Activated CD4-positive, alpha-beta T cell treated with anti-CD3 and anti-CD28 coated beads for 36 hours (primary cell): ENCODE measurements at regions of chr2 and their contacts with region 1.

Region 1: GRCh38 chr2:181937473-181937872 is 45.9 kb downstream of the ITPRID2 start:
- DNase-seq: no peak
- ATAC-seq: no peak
- H3K4me3 Mint-ChIP-seq: no peak overlapping the region
- H3K27ac Mint-ChIP-seq: no peak overlapping the region
- H3K4me1 Mint-ChIP-seq: no peaks in the 10 kb centered on the region
- H3K27me3 Mint-ChIP-seq: peaks cover 7% of the 10 kb centered on the region

Region 2: GRCh38 chr2:181895818-181896217 is 41.7 kb before region 1 on chr2:
- CTCF ChIA-PET with region 1: no interaction called
- POLR2A ChIA-PET with region 1: no interaction called
- intact Hi-C with region 1: no loop called
- DNase-seq: no peak
- ATAC-seq: no peak
- H3K4me3 Mint-ChIP-seq: no peak overlapping the region
- H3K27ac Mint-ChIP-seq: no peak overlapping the region
- H3K4me1 Mint-ChIP-seq: peaks cover 43% of the 10 kb centered on the region
- H3K27me3 Mint-ChIP-seq: peaks cover 2% of the 10 kb centered on the region

Region 3: GRCh38 chr2:181970160-181970794 is 32.8 kb after region 1 on chr2:
- CTCF ChIA-PET with region 1: no interaction called
- POLR2A ChIA-PET with region 1: no interaction called
- intact Hi-C with region 1: loop called in 1 of 2 experiments (anchors 1 kb)
- DNase-seq: no peak
- ATAC-seq: no peak
- H3K4me3 Mint-ChIP-seq: no peak overlapping the region
- H3K27ac Mint-ChIP-seq: no peak overlapping the region
- H3K4me1 Mint-ChIP-seq: no peaks in the 10 kb centered on the region
- H3K27me3 Mint-ChIP-seq: peaks cover 15% of the 10 kb centered on the region